Posterior vena cava (tissue), 2 donors: ENCODE measurements at regions of chr13 and their contacts with region 1.

Region 1: GRCh38 chr13:75482070-75482819 is at the start of gene TBC1D4:
- DNase-seq: peak; percentile 95
- total RNA-seq, gene TBC1D4: 14.9 to 20.3 TPM

Region 2: DNA sequence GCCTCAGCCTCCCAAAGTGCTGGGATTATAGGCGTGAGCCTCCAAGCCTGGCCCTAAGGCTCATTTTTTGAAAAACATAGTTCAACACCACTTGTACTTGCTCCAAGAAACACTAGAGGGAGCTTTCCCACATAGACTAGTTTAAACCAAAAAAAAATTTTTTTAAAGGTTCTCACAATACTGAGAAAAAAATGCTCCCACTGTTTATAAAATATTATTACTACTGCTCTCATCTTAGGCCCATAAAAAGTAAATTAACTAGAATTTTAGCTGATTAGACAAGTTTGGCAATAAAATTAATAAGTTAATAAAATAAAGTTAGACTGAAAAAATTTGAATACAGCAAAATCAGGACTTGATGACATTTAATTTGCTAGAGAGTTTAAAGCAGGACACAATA is 109.7 kb before region 1 on chr13:
- intact Hi-C with region 1: loop called (anchors 2 to 5 kb)
- DNase-seq: no peak

Region 3: GRCh38 chr13:75549262-75550158 is 67.3 kb after region 1 on chr13 and contains the start of gene UCHL3:
- intact Hi-C with region 1: loop called in 1 of 2 experiments (anchors 5 kb)
- DNase-seq: peak; percentile 99
- total RNA-seq, gene UCHL3: 29.2 to 39.9 TPM

Region 4: GRCh38 chr13:75656425-75656989 is 174.3 kb after region 1 on chr13:
- intact Hi-C with region 1: no loop called
- DNase-seq: no peak